ENCODE measurements at regions of chr17 and their contacts with region 1.

Region 1: GRCh38 chr17:61412143-61412859 is 12.7 kb downstream of the TBX2 start:
- DNase-seq: peak; percentile 79
- H3K4me3 Mint-ChIP-seq: peak overlapping the region; percentile 63
- H3K27ac Mint-ChIP-seq: no peak overlapping the region
- H3K4me1 Mint-ChIP-seq: peaks cover 23% of the 10 kb centered on the region
- H3K27me3 Mint-ChIP-seq: peaks cover 35% of the 10 kb centered on the region

Region 2: DNA sequence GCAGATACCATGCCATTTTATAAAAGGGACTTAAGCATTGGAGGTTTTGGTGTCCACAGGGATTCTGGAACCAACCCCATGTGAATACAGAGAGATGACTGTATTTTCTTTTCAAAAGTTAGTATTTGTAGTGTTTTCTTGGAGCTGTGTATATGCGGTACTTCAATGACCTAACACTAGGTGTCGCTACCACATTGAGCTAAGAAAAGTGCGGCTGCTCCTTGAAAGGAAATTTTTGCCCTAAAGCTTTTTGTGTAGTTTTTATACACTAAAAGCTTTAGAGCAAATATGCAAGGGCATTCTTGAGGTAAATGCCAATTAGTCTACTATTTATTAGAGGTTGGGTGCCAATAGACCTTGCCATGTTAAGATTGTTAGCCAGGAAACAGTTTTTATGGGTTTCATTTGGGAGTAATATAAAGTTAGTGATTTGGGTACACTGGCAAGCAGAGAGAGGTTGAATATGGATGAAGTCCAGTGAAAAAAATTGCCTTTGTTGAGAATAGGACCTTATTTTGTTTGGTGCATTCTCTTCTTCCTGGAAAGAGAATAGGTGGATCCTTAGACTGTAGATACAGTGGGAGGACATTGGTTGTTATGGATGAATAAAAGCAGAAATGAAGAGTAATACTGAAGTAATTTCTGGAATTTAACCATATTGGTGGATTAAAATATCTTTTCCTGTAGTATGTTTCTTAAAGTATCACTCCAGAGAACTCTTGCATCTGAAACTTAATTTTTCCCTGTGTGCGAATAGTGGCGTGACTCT is 691.4 kb before region 1 on chr17:
- CTCF ChIA-PET with region 1: no interaction called
- intact Hi-C with region 1: loop called (anchors 1 kb)
- DNase-seq: peak; percentile 57
- H3K4me3 Mint-ChIP-seq: no peak overlapping the region
- H3K27ac Mint-ChIP-seq: no peak overlapping the region
- H3K4me1 Mint-ChIP-seq: peaks cover 2% of the 10 kb centered on the region
- H3K27me3 Mint-ChIP-seq: no peaks in the 10 kb centered on the region

Region 3: DNA sequence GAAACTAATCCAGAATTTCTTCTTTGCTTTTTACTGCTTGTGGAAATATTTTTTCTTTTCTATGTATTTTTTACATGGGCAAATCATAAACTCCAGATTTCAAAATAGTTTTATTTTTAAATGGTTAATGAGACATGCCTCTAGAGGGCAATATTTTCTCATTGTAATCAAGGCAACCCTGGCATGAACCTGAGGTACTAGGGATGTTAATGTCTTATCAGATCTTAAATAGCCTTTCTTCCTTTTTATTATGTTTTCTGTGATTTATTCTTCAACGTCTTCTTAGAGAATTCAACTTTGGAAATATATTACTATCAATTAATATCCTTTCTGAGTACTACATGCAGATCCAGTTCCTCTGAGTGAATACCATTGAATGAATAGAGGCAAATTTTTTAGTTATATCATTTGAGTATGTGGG is 410.0 kb before region 1 on chr17:
- CTCF ChIA-PET with region 1: no interaction called
- intact Hi-C with region 1: loop called (anchors 1 kb)
- DNase-seq: no peak
- H3K4me3 Mint-ChIP-seq: no peak overlapping the region
- H3K27ac Mint-ChIP-seq: no peak overlapping the region
- H3K4me1 Mint-ChIP-seq: no peaks in the 10 kb centered on the region
- H3K27me3 Mint-ChIP-seq: no peaks in the 10 kb centered on the region

Region 4: GRCh38 chr17:61314368-61315078 is 97.8 kb before region 1 on chr17:
- CTCF ChIA-PET with region 1: no interaction called
- intact Hi-C with region 1: no loop called
- DNase-seq: no peak
- H3K4me3 Mint-ChIP-seq: no peak overlapping the region
- H3K27ac Mint-ChIP-seq: no peak overlapping the region
- H3K4me1 Mint-ChIP-seq: no peaks in the 10 kb centered on the region
- H3K27me3 Mint-ChIP-seq: no peaks in the 10 kb centered on the region

Region 5: GRCh38 chr17:61457226-61457983 is 45.1 kb after region 1 on chr17:
- CTCF ChIA-PET with region 1: interaction called, 3 read pairs
- intact Hi-C with region 1: loop called (anchors 2 kb)
- DNase-seq: no peak
- H3K4me3 Mint-ChIP-seq: peak overlapping the region; percentile 64
- H3K27ac Mint-ChIP-seq: no peak overlapping the region
- H3K4me1 Mint-ChIP-seq: peaks cover 50% of the 10 kb centered on the region
- H3K27me3 Mint-ChIP-seq: peaks cover 80% of the 10 kb centered on the region

Region 6: DNA sequence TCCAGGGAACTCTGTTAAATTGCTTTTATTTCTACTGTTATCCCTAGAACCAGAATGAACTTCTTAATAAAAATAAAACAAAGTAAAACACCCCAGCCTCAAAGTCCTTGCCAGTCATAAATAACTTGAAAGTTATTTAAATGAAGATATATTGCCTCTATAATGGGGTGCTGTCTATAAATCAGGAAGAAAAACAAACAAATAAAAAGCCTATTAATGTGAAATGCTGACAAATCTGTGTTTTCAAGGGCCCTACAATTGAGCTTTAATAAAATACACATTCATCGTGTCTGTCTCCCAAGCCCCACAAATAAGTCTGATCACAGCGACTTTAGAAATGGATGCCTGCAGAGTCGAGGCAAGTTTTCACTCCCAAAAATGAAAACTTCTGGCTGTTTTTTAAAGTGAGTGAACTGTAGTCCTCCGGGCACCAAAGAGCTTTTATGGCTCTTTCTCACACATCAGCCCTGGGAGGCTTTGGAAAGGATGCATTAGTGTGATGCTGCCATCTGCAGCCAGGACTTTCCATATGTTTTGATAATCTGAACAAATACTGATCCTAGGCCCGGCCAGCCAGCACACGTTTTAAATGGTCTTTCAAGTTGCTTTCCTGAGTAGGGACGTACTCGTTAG is 162.4 kb after region 1 on chr17:
- CTCF ChIA-PET with region 1: interaction called, 4 read pairs
- intact Hi-C with region 1: loop called (anchors 1 kb)
- DNase-seq: peak; percentile 38
- H3K4me3 Mint-ChIP-seq: no peak overlapping the region
- H3K27ac Mint-ChIP-seq: no peak overlapping the region
- H3K4me1 Mint-ChIP-seq: peaks cover 2% of the 10 kb centered on the region
- H3K27me3 Mint-ChIP-seq: peaks cover 15% of the 10 kb centered on the region

Region 7: DNA sequence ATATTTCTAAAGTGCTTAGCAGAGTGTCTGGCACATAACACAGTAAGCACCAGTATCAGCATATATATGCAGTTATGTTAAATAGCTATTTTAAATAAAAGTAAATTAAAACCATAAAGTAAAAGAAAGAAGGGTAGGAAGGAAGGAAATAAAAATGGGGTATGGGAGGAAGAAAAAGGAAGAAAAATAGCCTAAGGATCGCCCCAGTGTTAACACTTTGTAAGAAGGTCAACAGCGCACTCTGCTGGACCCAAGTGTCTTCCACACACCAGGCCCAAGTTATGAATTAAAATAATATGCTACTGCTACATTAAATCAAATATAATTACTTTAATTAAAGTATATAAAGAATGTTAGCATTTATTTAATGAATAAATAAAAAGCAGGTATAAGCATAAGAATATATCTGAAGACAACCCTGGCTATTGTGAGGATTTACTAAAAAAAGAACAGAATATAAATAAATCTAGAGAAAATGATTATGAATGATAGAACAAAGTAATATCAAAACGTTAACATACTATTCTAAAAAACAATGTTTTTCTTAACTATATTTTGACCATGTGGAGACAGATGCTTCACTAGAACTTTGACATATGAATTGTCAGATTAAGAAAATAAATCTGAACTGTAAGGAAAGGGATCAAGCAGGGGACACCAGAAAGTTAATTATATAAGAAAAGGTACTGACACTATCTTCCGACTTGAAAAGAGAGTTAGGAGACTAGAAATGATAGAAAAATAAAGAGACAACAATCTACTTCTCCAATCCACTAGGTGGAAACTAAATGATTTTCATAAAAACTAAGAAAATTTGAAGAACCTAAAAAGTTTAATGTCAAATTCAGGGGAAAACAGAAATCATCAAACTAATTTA is 425.1 kb after region 1 on chr17:
- CTCF ChIA-PET with region 1: interaction called, 4 read pairs
- intact Hi-C with region 1: loop called (anchors 1 kb)
- DNase-seq: peak; percentile 63
- H3K4me3 Mint-ChIP-seq: no peak overlapping the region
- H3K27ac Mint-ChIP-seq: no peak overlapping the region
- H3K4me1 Mint-ChIP-seq: no peaks in the 10 kb centered on the region
- H3K27me3 Mint-ChIP-seq: no peaks in the 10 kb centered on the region

Region 8: DNA sequence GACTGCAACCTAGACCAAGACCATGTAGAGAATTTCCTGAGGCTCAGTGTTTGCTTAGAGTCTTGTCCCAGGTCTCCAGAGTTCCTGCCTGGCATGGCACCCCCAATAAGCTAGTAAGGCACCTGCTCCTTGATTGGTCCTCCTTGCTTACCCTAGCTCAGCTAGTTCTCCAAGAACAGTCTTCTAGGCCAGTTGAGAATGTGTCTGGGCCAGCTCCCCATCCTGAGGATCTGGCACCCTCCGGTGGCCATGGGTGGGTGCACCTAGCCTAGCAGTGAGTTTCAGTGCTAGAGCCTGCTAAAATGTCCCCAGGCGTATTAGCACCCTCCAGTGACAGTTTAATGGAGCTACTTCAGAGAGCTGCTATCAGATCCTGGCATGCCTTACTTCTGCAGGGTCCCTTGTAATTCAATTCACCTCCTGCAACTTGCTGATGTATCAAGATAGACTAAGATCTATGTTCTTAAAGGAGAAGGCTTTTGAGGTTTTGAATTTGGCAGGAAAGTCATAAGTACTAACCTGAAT is 697.1 kb after region 1 on chr17:
- CTCF ChIA-PET with region 1: interaction called, 7 read pairs
- intact Hi-C with region 1: loop called (anchors 1 kb)
- DNase-seq: peak; percentile 78
- H3K4me3 Mint-ChIP-seq: no peak overlapping the region
- H3K27ac Mint-ChIP-seq: no peak overlapping the region
- H3K4me1 Mint-ChIP-seq: no peaks in the 10 kb centered on the region
- H3K27me3 Mint-ChIP-seq: no peaks in the 10 kb centered on the region

Measured in activated naive CD4-positive, alpha-beta T cell treated with anti-CD3 and anti-CD28 coated beads for 36 hours (primary cell).